ENCODE measurements at regions of chr4 and their contacts with region 1.

Region 1: GRCh38 chr4:26319467-26319948 is 1.3 kb upstream of the RBPJ start:
- DNase-seq: peak; percentile 99
- H3K4me3 Mint-ChIP-seq: peak overlapping the region; percentile 100
- H3K27ac Mint-ChIP-seq: peak overlapping the region; percentile 100
- H3K4me1 Mint-ChIP-seq: peaks cover 35% of the 10 kb centered on the region
- H3K27me3 Mint-ChIP-seq: no peaks in the 10 kb centered on the region

Region 2: DNA sequence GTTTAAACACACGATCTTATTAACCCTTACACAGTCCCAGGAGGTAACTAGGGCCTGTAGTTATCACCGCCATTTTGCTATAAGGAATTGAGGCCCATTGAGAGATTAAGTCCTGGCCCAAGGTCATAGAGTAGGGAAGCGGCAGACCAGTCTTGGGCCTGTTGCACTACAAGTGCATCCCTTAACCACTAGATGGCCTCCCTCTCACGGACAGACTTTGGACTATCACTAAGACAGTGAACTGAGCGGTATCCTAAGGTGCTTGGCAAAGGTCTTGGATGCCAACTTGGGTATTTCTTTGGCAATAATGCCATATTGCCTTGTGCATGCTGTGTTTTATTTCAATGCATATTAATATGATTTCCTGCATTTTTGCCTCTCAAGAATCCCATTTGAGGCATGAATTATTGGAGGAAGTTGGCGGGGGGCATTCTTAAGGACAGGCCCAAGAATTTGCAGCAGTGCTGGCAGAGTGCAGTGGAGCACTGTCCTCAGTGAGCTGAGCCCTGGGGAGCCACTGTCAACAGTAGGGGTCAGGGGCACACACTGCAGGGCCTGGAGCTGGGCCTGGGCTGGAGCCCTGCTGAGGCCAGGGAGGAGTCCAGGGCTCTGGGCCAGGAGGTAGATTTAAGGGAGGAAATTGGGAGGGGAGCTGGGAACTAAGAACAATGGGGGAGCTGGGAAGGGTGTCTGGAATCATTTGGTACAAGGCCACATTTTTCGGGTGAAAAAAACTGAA is 258.1 kb before region 1 on chr4:
- CTCF ChIA-PET with region 1: interaction called, 3 read pairs
- POLR2A ChIA-PET with region 1: interaction called, 10 read pairs
- intact Hi-C with region 1: no loop called
- DNase-seq: peak; percentile 43
- H3K4me3 Mint-ChIP-seq: no peak overlapping the region
- H3K27ac Mint-ChIP-seq: no peak overlapping the region
- H3K4me1 Mint-ChIP-seq: peaks cover 26% of the 10 kb centered on the region
- H3K27me3 Mint-ChIP-seq: no peaks in the 10 kb centered on the region

Region 3: GRCh38 chr4:26088433-26088928 is 231.0 kb before region 1 on chr4:
- CTCF ChIA-PET with region 1: interaction called, 3 read pairs
- POLR2A ChIA-PET with region 1: interaction called, 26 read pairs
- intact Hi-C with region 1: loop called (anchors 2 kb)
- DNase-seq: peak; percentile 59
- H3K4me3 Mint-ChIP-seq: peak overlapping the region; percentile 62
- H3K27ac Mint-ChIP-seq: peak overlapping the region; percentile 94
- H3K4me1 Mint-ChIP-seq: peaks cover 61% of the 10 kb centered on the region
- H3K27me3 Mint-ChIP-seq: no peaks in the 10 kb centered on the region

Region 4: DNA sequence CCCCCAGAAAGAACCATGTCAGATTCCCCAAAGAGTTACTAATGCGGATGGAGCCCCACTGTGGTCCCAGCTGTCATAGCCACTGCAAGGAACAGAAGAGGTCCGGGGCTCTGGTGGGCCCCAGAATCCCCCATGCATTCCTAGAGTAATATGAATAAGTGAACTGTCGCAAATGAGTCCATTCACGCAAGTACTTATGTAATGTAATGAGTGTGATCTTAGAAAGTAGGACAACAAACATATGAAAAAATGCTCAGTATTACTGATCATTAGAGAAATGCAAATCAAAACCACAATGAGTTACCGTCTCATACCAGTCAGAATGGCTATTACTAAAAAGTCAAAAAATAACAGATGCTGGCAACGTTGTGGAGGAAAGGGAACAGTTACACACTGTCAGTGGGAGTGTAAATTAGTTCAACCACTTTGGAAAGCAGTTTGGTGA is 140.2 kb before region 1 on chr4:
- CTCF ChIA-PET with region 1: interaction called, 4 read pairs
- POLR2A ChIA-PET with region 1: interaction called, 6 read pairs
- intact Hi-C with region 1: loop called (anchors 1 kb)
- DNase-seq: peak; percentile 72
- H3K4me3 Mint-ChIP-seq: no peak overlapping the region
- H3K27ac Mint-ChIP-seq: peak overlapping the region; percentile 82
- H3K4me1 Mint-ChIP-seq: peaks cover 29% of the 10 kb centered on the region
- H3K27me3 Mint-ChIP-seq: no peaks in the 10 kb centered on the region

Region 5: DNA sequence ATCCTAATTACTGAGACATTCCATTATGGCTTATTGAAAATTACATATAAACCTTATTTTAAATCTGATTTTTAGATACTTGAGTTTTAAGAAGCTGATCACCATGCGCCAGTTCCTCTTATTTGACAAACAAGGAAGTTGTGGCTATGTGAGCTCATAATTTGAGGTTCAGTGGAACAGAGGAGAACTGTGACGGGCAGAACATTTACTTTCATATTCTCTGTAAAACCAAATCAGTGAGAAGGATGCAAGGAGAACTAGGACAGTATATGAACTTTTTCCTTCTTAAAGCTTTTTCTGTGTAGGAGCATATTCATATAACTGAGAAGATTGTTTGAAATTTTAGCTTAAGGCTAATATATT is 566.4 kb after region 1 on chr4:
- CTCF ChIA-PET with region 1: no interaction called
- POLR2A ChIA-PET with region 1: no interaction called
- intact Hi-C with region 1: loop called (anchors 1 kb)
- DNase-seq: no peak
- H3K4me3 Mint-ChIP-seq: peak overlapping the region; percentile 63
- H3K27ac Mint-ChIP-seq: peak overlapping the region; percentile 83
- H3K4me1 Mint-ChIP-seq: peaks cover 67% of the 10 kb centered on the region
- H3K27me3 Mint-ChIP-seq: no peaks in the 10 kb centered on the region